ENCODE measurements at regions of chr3 and their contacts with region 1.

Region 1: DNA sequence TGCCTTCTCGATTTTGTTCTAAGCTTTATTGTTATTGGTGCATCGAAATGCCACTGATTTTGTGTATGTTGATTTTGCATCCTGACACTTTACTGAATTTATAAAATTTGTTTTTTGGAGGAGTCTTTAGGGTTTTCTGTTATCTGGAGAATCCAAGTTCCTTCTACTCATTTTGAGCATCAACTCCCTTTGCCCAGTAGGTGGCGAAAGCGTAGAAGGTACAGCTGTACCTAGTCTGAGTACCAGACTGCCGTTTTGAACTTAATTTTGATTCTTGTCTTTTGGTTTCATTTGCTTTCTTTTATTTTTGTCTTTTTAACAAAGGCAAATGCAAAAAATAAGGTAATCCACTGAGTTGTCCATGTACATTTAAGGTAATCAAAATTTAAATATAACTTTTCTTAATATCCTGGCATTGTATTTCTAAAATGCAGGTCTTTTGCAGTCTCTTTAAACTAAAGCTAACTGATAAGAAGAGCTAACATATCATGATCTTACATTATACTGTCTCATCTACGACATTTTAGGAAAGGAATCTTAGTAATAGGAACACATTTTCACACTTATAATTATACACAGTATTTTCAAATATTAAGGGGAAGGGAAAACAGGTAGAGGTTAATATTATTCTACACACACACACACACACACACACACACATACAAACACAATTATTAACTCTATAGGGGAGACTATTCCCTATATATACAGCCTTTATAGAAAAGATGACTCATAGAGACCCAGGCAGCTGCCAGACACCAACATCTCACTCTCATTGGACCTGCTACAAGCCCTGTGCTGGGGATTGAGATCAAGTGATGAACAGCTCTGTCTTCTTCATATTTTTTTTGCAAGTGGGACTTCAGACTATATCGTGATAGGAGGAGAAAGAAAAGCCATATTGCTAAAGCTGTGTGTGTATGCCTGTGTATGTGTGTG is 71.7 kb downstream of the SYNPR start:
- DNase-seq: peak in 1 of 2 donors; percentile 54
- ATAC-seq: no peak
- H3K4me3 ChIP-seq: no peak overlapping the region
- H3K27ac ChIP-seq: no peak overlapping the region
- H3K4me1 ChIP-seq: no peaks in the 10 kb centered on the region
- H3K27me3 ChIP-seq: no peaks in the 10 kb centered on the region

Region 2: GRCh38 chr3:63207066-63207640 is 142.7 kb before region 1 on chr3:
- intact Hi-C with region 1: no loop called
- DNase-seq: no peak
- ATAC-seq: no peak
- H3K4me3 ChIP-seq: no peak overlapping the region
- H3K27ac ChIP-seq: no peak overlapping the region
- H3K4me1 ChIP-seq: no peaks in the 10 kb centered on the region
- H3K27me3 ChIP-seq: no peaks in the 10 kb centered on the region

Region 3: GRCh38 chr3:63818281-63819150 is 468.7 kb after region 1 on chr3:
- intact Hi-C with region 1: loop called (anchors 2 kb)
- DNase-seq: peak; percentile 53 to 76
- ATAC-seq: no peak
- H3K4me3 ChIP-seq: no peak overlapping the region
- H3K27ac ChIP-seq: no peak overlapping the region
- H3K4me1 ChIP-seq: no peaks in the 10 kb centered on the region
- H3K27me3 ChIP-seq: no peaks in the 10 kb centered on the region

Measured in aorta (tissue), 5 donors.